HEK293T (cell line): ENCODE measurements at regions of chr9 and their contacts with region 1.

Region 1: DNA sequence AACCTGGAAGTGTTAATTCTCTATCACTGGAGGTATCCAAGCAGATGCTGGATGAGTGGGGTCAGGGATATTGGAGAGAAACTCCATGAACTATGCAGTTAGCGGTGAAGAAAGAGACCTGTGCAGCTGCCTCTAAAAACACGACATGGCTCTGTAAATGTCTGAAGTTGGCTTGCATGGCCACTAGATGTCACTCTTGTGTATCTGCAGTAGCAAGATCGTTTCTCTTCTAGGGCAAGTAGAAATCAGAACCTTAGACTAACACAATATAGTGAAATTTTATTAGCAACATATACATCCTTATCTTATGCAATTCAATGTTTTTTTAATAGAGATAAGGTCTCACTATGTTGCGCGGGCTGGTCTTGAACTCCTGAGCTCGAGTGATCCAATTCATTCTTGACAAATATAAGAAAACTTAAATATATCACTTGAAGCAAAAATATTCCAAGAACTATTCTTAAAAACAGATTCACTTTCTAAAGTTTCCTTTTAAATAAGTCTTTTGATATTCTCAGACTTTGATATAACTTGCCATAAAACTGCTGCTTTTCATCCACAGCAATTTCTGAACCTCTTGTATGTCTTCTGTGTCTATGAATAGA is 2.9 kb downstream of the OR2S2 start:
- DNase-seq: peak; percentile 74

Region 2: GRCh38 chr9:36023260-36024048 is 68.4 kb after region 1 on chr9:
- CTCF ChIA-PET with region 1: interaction called, 10 read pairs
- POLR2A ChIA-PET with region 1: no interaction called
- DNase-seq: peak; percentile 69